Common myeloid progenitor, CD34-positive (primary cell): ENCODE measurements at regions of chr18 and their contacts with region 1.

Region 1: DNA sequence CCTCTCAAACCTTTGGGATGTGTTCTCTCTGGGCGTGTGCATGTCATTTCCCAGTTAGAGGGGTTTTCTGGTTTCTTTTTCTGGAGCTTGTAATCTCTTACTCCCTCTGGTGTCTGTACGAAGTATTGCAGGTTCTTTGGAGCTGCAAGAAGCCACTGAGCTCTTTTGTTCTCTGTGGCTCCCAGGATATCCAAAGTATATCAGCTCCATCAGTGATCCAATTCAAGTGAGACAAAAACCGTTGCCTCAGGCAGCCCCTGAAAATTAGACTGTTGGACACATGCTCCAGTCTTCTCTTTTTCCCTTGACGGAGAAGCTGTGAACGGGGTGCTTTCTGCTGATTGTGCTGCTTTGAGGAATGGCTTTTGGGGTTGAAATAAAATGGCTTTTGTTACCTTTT is 59.0 kb upstream of the LDLRAD4 start:
- DNase-seq: peak; percentile 58 to 83 (median 77)
- H3K4me3 ChIP-seq: no peak overlapping the region
- H3K27ac ChIP-seq: no peak overlapping the region
- H3K4me1 ChIP-seq: no peaks in the 10 kb centered on the region
- H3K27me3 ChIP-seq: no peaks in the 10 kb centered on the region

Region 2: DNA sequence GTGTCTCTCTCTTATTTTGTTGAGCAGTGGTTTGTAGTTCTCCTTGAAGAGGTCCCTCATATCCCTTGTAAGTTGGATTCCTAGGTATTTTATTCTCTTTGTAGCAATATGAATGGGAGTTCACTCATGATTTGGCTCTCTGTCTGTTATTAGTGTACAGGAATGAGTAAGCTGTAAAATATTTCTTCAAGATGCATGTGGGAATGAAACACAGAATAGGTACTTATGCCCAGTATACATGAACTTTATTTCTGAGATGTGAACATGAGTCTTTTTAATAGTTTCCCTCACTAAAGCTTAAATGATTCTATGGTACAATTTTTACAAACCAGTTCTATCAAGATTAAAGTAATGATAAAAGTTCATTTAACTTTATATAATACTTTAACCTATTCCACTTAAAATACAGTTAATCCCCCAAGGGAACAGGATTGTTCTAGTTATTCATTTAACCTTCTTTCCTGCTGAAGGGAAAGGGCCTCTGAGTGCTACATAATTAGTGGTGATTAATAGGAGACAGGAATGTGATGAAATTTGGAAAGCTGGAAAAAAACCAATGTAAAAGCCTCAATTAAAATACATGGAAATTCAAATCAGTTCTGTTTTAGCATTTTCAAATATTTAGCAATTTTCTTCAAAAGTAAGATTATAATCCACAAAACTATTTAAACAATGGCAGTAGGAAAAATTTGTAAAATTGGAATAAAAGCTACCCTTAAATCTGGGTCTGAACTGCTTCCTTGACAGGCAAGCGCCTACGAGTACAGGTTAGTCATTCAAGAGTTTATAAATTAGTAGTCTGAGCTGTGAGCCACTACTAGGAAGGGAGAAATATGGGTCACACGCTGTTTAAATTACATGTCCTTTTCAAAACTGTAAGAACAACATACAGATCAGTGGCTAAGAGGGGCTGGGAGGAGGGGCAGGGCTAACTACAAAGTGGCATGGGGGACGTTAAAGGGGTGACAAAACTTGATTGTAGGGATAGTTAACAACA is 530.6 kb before region 1 on chr18:
- CTCF ChIA-PET with region 1: no interaction called
- POLR2A ChIA-PET with region 1: no interaction called
- DNase-seq: no peak
- H3K4me3 ChIP-seq: no peak overlapping the region
- H3K27ac ChIP-seq: no peak overlapping the region
- H3K4me1 ChIP-seq: peaks cover 0 to 9% (median 2%) of the 10 kb centered on the region in 4 experiments
- H3K27me3 ChIP-seq: no peaks in the 10 kb centered on the region

Region 3: DNA sequence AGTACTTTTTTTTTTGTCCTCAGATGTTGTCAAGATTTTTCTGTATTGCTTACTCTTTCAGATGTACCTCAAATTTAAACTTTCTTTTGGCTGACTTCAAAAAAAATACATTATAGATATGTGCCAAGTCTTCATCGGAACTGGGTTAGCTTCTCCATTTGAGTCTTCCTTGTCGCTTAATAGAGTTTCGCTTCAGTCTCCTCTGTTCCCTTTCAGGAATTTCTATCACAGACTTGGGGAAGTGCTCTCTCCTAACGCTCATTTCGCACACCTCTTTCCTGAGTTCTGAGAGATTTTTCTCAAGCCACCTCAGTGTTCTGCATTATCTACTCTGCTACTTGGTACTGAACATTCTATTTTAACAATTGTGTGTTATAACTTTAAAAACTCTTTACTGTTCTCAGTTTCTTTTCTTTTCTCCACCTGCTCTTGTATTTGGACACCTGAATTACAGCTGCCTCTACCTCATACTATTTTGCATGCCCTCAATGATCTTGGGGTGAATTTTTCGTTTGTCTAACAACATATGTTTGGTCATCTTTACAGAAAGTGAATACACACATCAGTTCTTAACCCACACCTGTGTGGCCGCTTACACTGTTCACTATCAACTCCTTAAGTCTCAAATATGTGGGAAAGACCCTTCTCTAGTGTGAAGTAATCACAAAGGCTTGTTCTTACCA is 292.0 kb before region 1 on chr18:
- CTCF ChIA-PET with region 1: no interaction called
- POLR2A ChIA-PET with region 1: no interaction called
- DNase-seq: no peak
- H3K4me3 ChIP-seq: no peak overlapping the region
- H3K27ac ChIP-seq: no peak overlapping the region
- H3K4me1 ChIP-seq: peaks cover 0 to 3% (median under 1%) of the 10 kb centered on the region in 4 experiments
- H3K27me3 ChIP-seq: no peaks in the 10 kb centered on the region

Region 4: GRCh38 chr18:13101659-13102197 is 57.9 kb before region 1 on chr18:
- CTCF ChIA-PET with region 1: no interaction called
- POLR2A ChIA-PET with region 1: no interaction called
- DNase-seq: no peak
- H3K4me3 ChIP-seq: no peak overlapping the region
- H3K27ac ChIP-seq: no peak overlapping the region
- H3K4me1 ChIP-seq: no peaks in the 10 kb centered on the region
- H3K27me3 ChIP-seq: no peaks in the 10 kb centered on the region

Region 5: GRCh38 chr18:13112982-13113381 is 46.6 kb before region 1 on chr18:
- CTCF ChIA-PET with region 1: interaction called, 26 read pairs
- POLR2A ChIA-PET with region 1: no interaction called
- DNase-seq: peak; percentile 30 to 77 (median 74)
- H3K4me3 ChIP-seq: no peak overlapping the region
- H3K27ac ChIP-seq: no peak overlapping the region
- H3K4me1 ChIP-seq: no peaks in the 10 kb centered on the region
- H3K27me3 ChIP-seq: no peaks in the 10 kb centered on the region

Region 6: DNA sequence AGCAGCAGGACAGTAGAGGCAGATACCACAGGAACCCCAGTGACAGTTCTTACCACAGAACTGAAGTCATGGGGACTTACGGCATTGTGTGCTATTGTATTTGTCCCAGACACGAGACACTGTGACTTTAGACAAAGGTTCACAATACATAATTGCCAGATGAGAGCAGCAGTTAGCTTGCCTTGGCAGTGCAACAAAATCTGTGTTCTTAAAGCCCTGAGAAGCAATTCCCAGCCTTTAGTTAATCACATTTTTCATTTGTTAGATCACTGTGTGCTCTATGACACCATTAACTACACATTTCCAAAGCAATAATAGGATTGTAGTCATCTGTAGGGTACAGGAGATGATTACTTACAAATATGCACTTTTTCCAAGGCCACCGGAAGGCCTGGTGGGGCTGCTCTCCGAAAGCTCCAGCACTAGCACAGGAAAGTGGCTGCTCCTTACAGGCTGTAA is 38.6 kb before region 1 on chr18:
- CTCF ChIA-PET with region 1: interaction called, 26 read pairs
- POLR2A ChIA-PET with region 1: no interaction called
- DNase-seq: no peak
- H3K4me3 ChIP-seq: no peak overlapping the region
- H3K27ac ChIP-seq: no peak overlapping the region
- H3K4me1 ChIP-seq: peaks cover 0 to 16% (median 9%) of the 10 kb centered on the region in 4 experiments
- H3K27me3 ChIP-seq: no peaks in the 10 kb centered on the region

Region 7: DNA sequence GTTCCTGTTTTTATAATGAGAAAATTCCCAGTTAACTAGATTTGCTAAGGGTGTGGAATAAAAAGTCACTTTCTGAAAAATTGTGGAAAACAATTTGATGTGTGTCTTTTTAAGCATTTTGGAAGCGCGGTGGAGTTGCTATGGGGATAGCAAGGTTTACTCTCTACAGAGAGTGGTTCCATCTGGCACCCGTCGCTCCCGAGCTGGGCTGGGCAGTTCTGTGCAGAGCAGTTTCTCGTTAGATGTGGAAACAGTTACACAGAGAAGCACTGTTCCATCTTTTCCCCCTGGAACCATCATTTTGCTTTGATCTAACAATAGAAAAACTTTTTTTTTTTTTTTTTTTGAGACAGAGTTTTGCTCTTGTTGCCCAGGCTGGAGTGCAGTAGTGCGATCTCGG is 76.4 kb after region 1 on chr18:
- CTCF ChIA-PET with region 1: no interaction called
- POLR2A ChIA-PET with region 1: no interaction called
- DNase-seq: no peak
- H3K4me3 ChIP-seq: no peak overlapping the region
- H3K27ac ChIP-seq: no peak overlapping the region
- H3K4me1 ChIP-seq: no peaks in the 10 kb centered on the region
- H3K27me3 ChIP-seq: no peaks in the 10 kb centered on the region